B cell (primary cell): ENCODE measurements at regions of chr3 and their contacts with region 1.

Region 1: GRCh38 chr3:46998121-46998851 is 18.8 kb downstream of the NBEAL2 start:
- DNase-seq: peak; percentile 79
- ATAC-seq: peak; percentile 88
- H3K4me3 ChIP-seq: no peak overlapping the region
- H3K4me3 Mint-ChIP-seq: no peak overlapping the region
- H3K27ac ChIP-seq: no peak overlapping the region
- H3K27ac Mint-ChIP-seq: no peak overlapping the region
- H3K4me1 ChIP-seq: peaks cover 3 to 16% of the 10 kb centered on the region in 2 donors
- H3K4me1 Mint-ChIP-seq: peaks cover 10% of the 10 kb centered on the region
- H3K27me3 ChIP-seq: no peaks in the 10 kb centered on the region
- H3K27me3 Mint-ChIP-seq: no peaks in the 10 kb centered on the region
- CTCF ChIP-seq: peak; percentile 84

Region 2: DNA sequence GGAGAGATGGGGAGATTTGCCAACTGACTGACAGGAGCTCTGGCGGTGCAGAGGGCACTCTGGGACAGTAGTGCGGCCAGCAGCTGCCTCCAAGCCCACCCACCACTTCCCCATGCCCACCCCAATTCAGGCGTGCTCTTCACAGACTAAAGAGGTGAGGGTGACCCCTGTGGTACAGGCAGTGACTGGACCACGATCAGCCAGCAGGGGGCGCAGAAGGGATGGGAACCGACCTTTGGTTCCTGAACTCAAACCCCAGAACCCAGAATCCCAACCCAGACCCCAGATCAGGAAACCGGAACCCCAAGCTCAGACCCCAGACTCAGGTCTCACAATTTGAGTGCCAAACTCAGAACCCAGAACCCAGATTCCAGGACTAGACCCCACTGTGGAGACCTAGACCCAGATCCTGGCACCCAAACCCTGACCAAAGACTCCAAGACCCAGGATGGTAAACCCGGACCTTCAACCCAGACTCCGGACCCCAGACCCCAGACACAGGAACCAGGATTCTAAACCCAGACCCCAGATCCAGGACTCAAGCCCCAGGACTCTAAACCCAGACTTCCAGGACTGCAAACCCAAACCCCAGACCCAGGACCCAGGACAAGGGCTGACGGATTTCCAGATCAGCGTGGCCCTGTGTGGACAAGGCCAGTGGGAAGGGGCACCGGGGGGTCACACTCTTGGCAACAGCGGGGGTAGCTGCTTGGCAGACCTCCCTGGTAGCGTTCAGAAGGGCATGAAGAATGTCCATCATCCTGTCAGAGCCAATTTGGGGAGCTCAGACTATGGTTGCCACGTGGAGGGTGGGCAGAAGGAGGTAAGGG is 131.4 kb before region 1 on chr3:
- CTCF ChIA-PET with region 1: interaction called, 6 read pairs
- POLR2A ChIA-PET with region 1: no interaction called
- intact Hi-C with region 1: loop called (anchors 1 kb)
- DNase-seq: peak; percentile 81
- ATAC-seq: peak; percentile 64
- H3K4me3 ChIP-seq: no peak overlapping the region
- H3K4me3 Mint-ChIP-seq: no peak overlapping the region
- H3K27ac ChIP-seq: no peak overlapping the region
- H3K27ac Mint-ChIP-seq: no peak overlapping the region
- H3K4me1 ChIP-seq: no peaks in the 10 kb centered on the region
- H3K4me1 Mint-ChIP-seq: no peaks in the 10 kb centered on the region
- H3K27me3 ChIP-seq: peaks cover 0 to 13% (median 2%) of the 10 kb centered on the region in 4 experiments
- H3K27me3 Mint-ChIP-seq: peaks cover 24% of the 10 kb centered on the region
- CTCF ChIP-seq: peak; percentile 80

Region 3: DNA sequence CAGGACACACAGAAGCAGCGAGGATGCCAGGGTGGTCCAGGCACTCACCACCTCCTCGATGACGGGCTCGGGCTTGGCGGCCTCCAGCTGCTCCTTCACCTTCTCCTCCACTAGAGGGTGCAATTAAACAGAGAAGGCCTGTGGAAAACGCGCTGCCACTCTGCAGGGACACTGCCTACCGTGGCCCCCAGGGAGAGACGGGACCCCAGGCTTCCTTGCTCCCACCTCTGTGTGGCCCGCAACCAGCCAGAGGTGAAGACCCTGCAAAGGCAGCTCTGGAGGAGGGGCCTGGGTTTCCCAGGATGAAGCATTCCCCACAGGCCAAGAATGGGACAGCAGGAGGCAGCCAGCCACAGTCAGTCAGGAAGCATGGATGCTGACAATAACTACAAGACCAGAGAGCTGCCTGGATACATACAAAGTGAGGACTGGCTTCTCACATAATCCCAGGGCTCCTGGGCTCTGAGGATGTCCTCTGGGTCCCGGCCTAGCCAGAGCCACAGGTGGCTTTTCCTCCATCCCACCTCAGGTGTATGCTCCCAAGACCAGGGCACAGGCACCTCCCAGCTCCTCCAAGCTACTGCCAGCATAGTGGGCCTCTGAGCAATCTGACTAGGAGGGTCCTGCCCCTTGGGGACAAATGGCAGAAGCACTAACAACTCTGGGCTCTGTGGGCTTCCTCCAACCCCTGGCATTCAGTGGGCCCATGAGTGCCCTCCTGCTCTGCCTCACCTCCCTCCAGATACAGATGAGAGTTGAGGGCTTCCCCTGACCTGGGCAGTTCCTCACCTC is 74.5 kb before region 1 on chr3:
- CTCF ChIA-PET with region 1: interaction called, 146 read pairs
- POLR2A ChIA-PET with region 1: no interaction called
- intact Hi-C with region 1: loop called (anchors 1 kb)
- DNase-seq: peak; percentile 66
- ATAC-seq: no peak
- H3K4me3 ChIP-seq: no peak overlapping the region
- H3K4me3 Mint-ChIP-seq: peak overlapping the region; percentile 21
- H3K27ac ChIP-seq: peak overlapping the region; percentile 85 to 92
- H3K27ac Mint-ChIP-seq: peak overlapping the region; percentile 83
- H3K4me1 ChIP-seq: peaks cover 57 to 59% of the 10 kb centered on the region in 2 donors
- H3K4me1 Mint-ChIP-seq: peaks cover 60% of the 10 kb centered on the region
- H3K27me3 ChIP-seq: no peaks in the 10 kb centered on the region
- H3K27me3 Mint-ChIP-seq: no peaks in the 10 kb centered on the region
- CTCF ChIP-seq: peak; percentile 70

Region 4: DNA sequence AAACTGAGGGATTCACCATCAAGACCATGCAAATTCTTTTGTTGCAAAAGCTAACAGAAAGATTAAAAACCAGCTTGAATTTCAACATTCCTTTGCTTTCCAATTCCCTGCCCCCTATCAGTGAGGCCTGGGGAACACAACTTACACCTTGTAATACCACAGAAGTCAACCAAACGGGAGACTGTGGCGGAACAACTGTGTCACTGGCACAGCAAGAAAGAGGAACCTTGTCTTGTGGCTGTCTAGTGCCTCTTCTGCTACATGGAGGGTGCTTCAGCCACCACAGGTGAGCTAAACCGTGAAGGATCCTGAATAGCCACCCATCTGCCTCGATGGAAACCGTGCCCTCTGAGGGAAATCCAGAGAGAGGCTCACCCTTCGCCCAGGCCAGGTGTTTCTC is 33.1 kb before region 1 on chr3:
- CTCF ChIA-PET with region 1: interaction called, 24 read pairs
- POLR2A ChIA-PET with region 1: no interaction called
- intact Hi-C with region 1: no loop called
- DNase-seq: peak; percentile 71
- ATAC-seq: peak; percentile 91
- H3K4me3 ChIP-seq: no peak overlapping the region
- H3K4me3 Mint-ChIP-seq: peak overlapping the region; percentile 63
- H3K27ac ChIP-seq: peak overlapping the region in 1 of 2 donors; percentile 57
- H3K27ac Mint-ChIP-seq: peak overlapping the region; percentile 92
- H3K4me1 ChIP-seq: peaks cover 73 to 74% of the 10 kb centered on the region in 2 donors
- H3K4me1 Mint-ChIP-seq: peaks cover 78% of the 10 kb centered on the region
- H3K27me3 ChIP-seq: no peaks in the 10 kb centered on the region
- H3K27me3 Mint-ChIP-seq: no peaks in the 10 kb centered on the region
- CTCF ChIP-seq: no peak

Region 5: DNA sequence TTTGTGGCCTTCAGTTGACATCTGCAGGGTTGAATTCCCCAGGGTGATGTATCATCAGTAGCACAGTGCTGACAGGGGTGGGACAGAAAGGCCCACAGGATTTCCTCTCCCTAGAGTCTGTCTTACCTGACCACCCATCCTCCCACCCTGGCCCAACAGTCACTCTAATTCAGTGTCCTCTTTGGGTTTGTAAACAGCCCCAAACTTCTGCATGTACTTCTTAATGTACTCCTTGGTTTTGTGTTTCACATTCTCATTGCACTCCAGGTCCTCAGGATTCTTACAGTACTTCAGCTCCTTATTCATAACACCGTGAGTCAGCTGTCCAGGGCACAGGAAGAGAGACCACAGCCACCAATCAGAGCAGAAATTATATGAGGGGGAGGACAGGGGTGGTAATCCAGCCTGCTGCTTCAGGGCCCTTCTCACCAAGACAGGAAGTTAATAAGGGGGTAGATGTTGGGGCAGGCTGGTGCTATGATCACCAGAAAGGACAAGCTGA is 18.7 kb after region 1 on chr3:
- CTCF ChIA-PET with region 1: interaction called, 3 read pairs
- POLR2A ChIA-PET with region 1: no interaction called
- intact Hi-C with region 1: loop called (anchors 1 kb)
- DNase-seq: peak; percentile 54
- ATAC-seq: peak; percentile 96
- H3K4me3 ChIP-seq: peak overlapping the region in 1 of 5 experiments; percentile 5
- H3K4me3 Mint-ChIP-seq: peak overlapping the region; percentile 56
- H3K27ac ChIP-seq: peak overlapping the region; percentile 32 to 79
- H3K27ac Mint-ChIP-seq: peak overlapping the region; percentile 86
- H3K4me1 ChIP-seq: peaks cover 23 to 27% of the 10 kb centered on the region in 2 donors
- H3K4me1 Mint-ChIP-seq: peaks cover 40% of the 10 kb centered on the region
- H3K27me3 ChIP-seq: no peaks in the 10 kb centered on the region
- H3K27me3 Mint-ChIP-seq: no peaks in the 10 kb centered on the region
- CTCF ChIP-seq: no peak